Left ventricle myocardium inferior (tissue), 1 donor: ENCODE measurements at regions of chr13 and their contacts with region 1.

Region 1: GRCh38 chr13:32315238-32316027 is at the starts of genes BRCA2 and ZAR1L:
- DNase-seq: peak; percentile 91
- H3K4me3 ChIP-seq: peak within 1 kb of the TSS; percentile 93
- H3K27ac ChIP-seq: peak within 1 kb of the TSS; percentile 96
- H3K4me1 ChIP-seq: peaks cover 16% of the 10 kb centered on the region
- H3K27me3 ChIP-seq: no peaks in the 10 kb centered on the region
- CTCF ChIP-seq: no peak
- total RNA-seq, gene BRCA2: 0.38 TPM
- total RNA-seq, gene ZAR1L: not detected

Region 2: DNA sequence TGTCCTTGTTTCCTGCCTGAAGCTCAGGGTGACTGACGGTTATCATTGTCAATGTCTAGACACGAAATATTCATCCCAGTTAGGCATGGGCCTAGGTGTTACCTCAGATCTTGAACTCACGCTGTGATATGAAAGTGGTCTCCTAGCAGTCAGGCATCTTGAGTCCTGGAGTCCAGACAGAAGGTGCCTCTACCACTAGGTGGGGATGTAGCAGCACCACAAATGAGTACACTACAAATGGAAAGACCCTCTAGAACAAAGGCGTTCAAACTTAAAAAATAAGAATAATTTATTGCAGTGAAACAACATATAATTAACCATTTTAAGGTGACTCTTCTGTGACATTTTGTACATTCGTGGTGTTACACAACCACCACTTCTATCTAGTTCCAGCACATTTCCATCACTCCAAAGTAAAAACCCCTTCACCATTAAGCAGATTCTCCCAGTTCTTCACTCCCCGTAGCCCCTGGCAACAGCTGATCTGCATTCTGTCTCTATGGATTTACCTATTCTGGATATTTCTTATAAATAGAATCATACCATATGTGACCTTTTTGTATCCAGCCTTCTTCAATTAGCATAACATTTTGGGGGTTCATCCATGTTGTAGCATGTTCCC is 295.7 kb before region 1 on chr13:
- intact Hi-C with region 1: loop called (anchors 10 kb)
- DNase-seq: no peak
- H3K4me3 ChIP-seq: no peak overlapping the region
- H3K27ac ChIP-seq: no peak overlapping the region
- H3K4me1 ChIP-seq: peaks cover 34% of the 10 kb centered on the region
- H3K27me3 ChIP-seq: no peaks in the 10 kb centered on the region
- CTCF ChIP-seq: peak; percentile 82

Region 3: GRCh38 chr13:32125221-32125631 is 190.2 kb before region 1 on chr13:
- intact Hi-C with region 1: no loop called
- DNase-seq: no peak
- H3K4me3 ChIP-seq: no peak overlapping the region
- H3K27ac ChIP-seq: peak overlapping the region; percentile 80
- H3K4me1 ChIP-seq: peaks cover 23% of the 10 kb centered on the region
- H3K27me3 ChIP-seq: no peaks in the 10 kb centered on the region
- CTCF ChIP-seq: no peak

Region 4: GRCh38 chr13:32609428-32609827 is 294.0 kb after region 1 on chr13:
- intact Hi-C with region 1: no loop called
- DNase-seq: no peak
- H3K4me3 ChIP-seq: no peak overlapping the region
- H3K27ac ChIP-seq: no peak overlapping the region
- H3K4me1 ChIP-seq: peaks cover 3% of the 10 kb centered on the region
- H3K27me3 ChIP-seq: no peaks in the 10 kb centered on the region
- CTCF ChIP-seq: no peak